Kidney (tissue), 22 donors: ENCODE measurements at regions of chr19 and their contacts with region 1.

Region 1: GRCh38 chr19:48588670-48589399 is 17.7 kb upstream of the SPACA4 start:
- DNase-seq: peak; percentile 90 to 96 (median 92)
- H3K4me3 ChIP-seq: peak overlapping the region; percentile 36 to 54 (median 45)
- H3K27ac ChIP-seq: no peak overlapping the region
- H3K4me1 ChIP-seq: peaks cover 0 to 5% (median 0%) of the 10 kb centered on the region in 3 donors
- H3K27me3 ChIP-seq: no peaks in the 10 kb centered on the region
- CTCF ChIP-seq: peak; percentile 78

Region 2: DNA sequence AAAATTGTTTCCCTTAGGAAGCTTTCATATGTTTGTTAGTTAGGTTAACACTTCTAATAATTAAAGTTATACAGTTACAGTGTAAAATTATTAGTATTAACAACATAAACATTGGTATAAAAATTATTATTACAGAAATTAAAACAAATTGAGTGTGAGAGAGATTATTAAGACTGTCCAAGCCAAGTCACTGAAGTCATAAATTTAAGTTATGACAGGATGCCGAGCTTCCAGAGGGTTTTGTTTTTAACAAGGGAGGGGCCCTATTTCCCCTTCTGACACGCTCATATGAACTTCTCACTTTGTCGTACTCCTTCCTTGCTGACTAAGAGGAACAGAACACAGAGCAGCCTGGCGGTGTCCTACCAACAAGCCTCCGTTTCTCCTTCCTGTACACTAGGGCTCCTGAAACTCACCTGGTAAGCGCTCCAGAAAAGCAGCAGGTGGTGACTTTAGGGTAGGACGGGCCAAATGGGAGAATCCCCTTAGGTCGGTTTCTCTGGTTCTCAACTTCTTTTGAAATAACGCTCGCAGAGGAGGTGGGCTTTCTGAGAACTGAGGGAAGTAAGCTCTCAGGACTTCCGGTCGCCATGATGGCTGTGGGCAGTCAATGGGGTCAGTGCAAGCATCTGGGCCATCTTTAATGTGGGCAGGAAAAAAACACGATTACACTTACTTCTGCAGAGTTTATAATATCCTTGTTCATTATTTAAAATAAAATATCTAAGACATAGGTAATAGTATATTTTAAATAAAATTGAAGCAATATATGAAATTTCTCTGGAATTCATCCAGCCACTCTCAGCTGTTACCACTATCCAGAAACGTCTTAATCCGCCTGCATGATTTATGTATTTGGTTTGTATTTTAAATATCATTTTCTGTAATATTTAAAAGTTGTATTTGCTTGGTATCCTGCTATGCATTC is 333.2 kb before region 1 on chr19 and contains the start of gene CARD8:
- intact Hi-C with region 1: loop called (anchors 10 kb)
- DNase-seq: peak; percentile 88 to 97 (median 91)
- H3K4me3 ChIP-seq: peak within 1 kb of the TSS; percentile 78 to 99 (median 91)
- H3K27ac ChIP-seq: peak within 1 kb of the TSS; percentile 87 to 98
- H3K4me1 ChIP-seq: peaks cover 0 to 2% (median 0%) of the 10 kb centered on the region in 3 donors
- H3K27me3 ChIP-seq: no peaks in the 10 kb centered on the region
- CTCF ChIP-seq: no peak
- total RNA-seq, gene CARD8: 53.1 TPM

Region 3: GRCh38 chr19:48489608-48490216 is 99.1 kb before region 1 on chr19:
- intact Hi-C with region 1: loop called (anchors 10 kb)
- DNase-seq: peak; percentile 66 to 90 (median 78)
- H3K4me3 ChIP-seq: no peak overlapping the region
- H3K27ac ChIP-seq: no peak overlapping the region
- H3K4me1 ChIP-seq: peaks cover 0 to 9% (median 0%) of the 10 kb centered on the region in 3 donors
- H3K27me3 ChIP-seq: no peaks in the 10 kb centered on the region
- CTCF ChIP-seq: peak; percentile 79

Region 4: DNA sequence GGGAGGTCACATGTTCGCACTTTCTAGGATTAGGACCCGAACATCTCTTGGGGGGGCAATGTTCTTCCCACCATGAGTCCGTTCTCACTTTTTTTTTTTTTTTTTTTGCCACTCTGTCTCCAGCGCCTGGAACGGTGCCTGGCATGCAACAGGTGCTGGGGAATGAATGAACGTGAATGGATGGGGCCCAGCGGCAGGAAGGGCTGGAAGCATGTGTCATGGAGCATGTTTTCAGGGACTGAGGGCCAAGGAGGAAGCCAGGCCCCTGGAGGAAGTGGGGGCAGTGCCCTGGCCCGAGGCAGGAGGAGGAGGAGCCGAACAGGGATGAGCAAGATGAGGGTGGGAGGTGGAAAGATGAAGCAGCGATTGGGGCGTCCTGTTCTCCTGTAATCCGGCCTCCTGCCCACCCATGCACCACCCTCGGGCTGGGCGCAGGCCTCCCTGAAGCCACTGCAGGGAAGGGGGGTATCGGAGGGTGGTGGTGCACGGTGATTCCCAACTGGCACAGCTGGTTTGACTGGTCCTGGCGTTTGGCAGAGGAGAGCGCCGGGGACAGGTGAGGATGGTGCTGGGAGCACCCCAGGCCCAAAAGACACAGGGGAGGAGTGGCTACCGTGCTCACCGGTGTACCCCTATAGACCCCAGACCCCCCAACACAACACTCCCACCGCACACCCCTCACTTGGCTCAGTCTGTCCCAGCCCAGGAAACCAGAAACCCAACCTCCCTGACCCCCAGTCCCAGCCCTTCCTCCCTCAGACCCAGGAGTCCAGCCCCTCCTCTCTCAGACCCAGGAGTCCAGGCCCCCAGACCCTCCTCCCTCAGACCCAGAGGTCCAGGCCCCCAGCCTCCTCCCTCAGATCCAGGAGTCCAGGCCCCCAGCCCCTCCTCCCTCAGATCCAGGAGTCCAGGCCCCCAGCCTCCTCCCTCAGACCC is 45.4 kb before region 1 on chr19:
- intact Hi-C with region 1: no loop called
- DNase-seq: peak; percentile 59 to 84 (median 66)
- H3K4me3 ChIP-seq: no peak overlapping the region
- H3K27ac ChIP-seq: no peak overlapping the region
- H3K4me1 ChIP-seq: no peaks in the 10 kb centered on the region
- H3K27me3 ChIP-seq: no peaks in the 10 kb centered on the region
- CTCF ChIP-seq: no peak